Heart left ventricle (tissue), 16 donors: ENCODE measurements at regions of chr20 and their contacts with region 1.

Region 1: DNA sequence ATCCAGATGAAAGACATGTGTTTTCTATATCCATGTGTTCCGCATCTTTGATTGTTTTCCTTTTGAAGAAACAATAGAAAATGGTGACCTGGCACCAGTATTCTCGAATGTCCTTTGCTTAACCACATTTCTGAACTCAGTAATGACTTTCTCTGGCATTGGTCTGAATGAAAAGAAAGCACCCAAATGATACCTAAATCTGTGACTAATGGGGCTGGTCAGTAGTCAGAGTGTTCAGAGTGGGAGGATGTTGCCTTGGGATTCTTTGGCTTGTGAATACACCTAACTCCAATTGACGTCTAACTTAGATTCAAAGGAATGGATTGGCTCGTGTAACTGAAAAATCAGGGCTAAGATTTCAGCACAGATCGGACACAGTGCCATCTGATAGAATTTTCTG is 27.1 kb downstream of the PARD6B start:
- DNase-seq: no peak
- ATAC-seq: no peak
- H3K4me3 ChIP-seq: no peak overlapping the region
- H3K27ac ChIP-seq: no peak overlapping the region
- H3K4me1 ChIP-seq: peaks cover 0 to 17% (median 3%) of the 10 kb centered on the region in 12 donors
- H3K27me3 ChIP-seq: no peaks in the 10 kb centered on the region
- CTCF ChIP-seq: no peak
- POLR2A ChIP-seq: no peak

Region 2: DNA sequence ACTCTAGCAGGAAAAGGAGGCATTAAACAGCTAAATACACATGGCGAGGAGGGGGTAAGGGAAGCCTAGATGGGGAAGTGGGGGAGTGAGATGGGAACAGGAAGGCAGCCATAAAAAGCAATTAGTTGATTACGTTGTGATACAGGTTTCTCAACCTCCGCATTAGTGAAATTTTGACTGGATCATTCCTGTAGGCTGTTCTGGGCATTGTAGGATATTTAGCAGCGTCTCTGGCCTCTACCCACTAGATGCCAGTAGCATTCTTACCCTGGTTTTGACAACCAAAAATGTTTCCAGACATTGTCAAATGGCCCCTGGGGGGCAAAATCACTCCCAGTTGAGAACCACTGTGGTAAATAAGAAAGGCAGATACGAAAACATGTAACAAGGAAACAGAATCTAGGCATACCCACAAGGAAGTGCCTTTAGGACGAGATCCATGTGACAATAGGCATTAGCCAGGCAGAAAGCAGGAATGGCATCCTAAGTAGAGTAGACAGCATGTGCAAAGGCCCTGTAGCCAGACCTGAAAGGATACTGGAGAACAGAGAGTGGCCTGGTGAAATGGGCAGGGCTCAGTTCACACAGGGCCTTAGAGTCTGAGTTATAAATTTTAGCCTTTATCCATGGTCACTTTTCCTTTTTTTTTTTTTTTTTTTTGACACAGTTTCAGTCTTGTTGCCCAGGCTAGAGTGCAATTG is 274.0 kb before region 1 on chr20:
- intact Hi-C with region 1: loop called in 1 of 10 experiments (anchors 10 kb)
- DNase-seq: no peak
- ATAC-seq: no peak
- H3K4me3 ChIP-seq: peak overlapping the region in 10 of 12 donors; percentile 31 to 63 (median 53)
- H3K27ac ChIP-seq: peak overlapping the region in 11 of 12 donors; percentile 55 to 94 (median 78)
- H3K4me1 ChIP-seq: peaks cover 0 to 24% (median 8%) of the 10 kb centered on the region in 12 donors
- H3K27me3 ChIP-seq: no peaks in the 10 kb centered on the region
- CTCF ChIP-seq: no peak
- POLR2A ChIP-seq: no peak

Region 3: GRCh38 chr20:50575847-50576720 is 182.4 kb before region 1 on chr20:
- intact Hi-C with region 1: no loop called
- DNase-seq: peak; percentile 62 to 83 (median 72)
- ATAC-seq: peak; percentile 64 to 72 (median 66)
- H3K4me3 ChIP-seq: no peak overlapping the region
- H3K27ac ChIP-seq: peak overlapping the region in 9 of 12 donors; percentile 13 to 84 (median 56)
- H3K4me1 ChIP-seq: peaks cover 0 to 71% (median 36%) of the 10 kb centered on the region in 12 donors
- H3K27me3 ChIP-seq: no peaks in the 10 kb centered on the region
- CTCF ChIP-seq: peak; percentile 53 to 79 (median 70)
- POLR2A ChIP-seq: no peak